Sigmoid colon (tissue), 7 donors: ENCODE measurements at regions of chr9 and their contacts with region 1.

Region 1: GRCh38 chr9:34376596-34377403 is at the start of gene MYORG:
- DNase-seq: peak; percentile 96
- H3K4me3 ChIP-seq: peak within 1 kb of the TSS; percentile 65 to 80 (median 78)
- H3K27ac ChIP-seq: peak within 1 kb of the TSS; percentile 79 to 92 (median 90)
- H3K4me1 ChIP-seq: peaks cover 0 to 73% (median 55%) of the 10 kb centered on the region in 4 donors
- H3K27me3 ChIP-seq: no peaks in the 10 kb centered on the region
- CTCF ChIP-seq: no peak
- EP300 ChIP-seq: no peak
- POLR2A ChIP-seq: peak; percentile 83 to 94
- total RNA-seq, gene MYORG: 3.9 to 23.5 (median 20.0) TPM

Region 2: DNA sequence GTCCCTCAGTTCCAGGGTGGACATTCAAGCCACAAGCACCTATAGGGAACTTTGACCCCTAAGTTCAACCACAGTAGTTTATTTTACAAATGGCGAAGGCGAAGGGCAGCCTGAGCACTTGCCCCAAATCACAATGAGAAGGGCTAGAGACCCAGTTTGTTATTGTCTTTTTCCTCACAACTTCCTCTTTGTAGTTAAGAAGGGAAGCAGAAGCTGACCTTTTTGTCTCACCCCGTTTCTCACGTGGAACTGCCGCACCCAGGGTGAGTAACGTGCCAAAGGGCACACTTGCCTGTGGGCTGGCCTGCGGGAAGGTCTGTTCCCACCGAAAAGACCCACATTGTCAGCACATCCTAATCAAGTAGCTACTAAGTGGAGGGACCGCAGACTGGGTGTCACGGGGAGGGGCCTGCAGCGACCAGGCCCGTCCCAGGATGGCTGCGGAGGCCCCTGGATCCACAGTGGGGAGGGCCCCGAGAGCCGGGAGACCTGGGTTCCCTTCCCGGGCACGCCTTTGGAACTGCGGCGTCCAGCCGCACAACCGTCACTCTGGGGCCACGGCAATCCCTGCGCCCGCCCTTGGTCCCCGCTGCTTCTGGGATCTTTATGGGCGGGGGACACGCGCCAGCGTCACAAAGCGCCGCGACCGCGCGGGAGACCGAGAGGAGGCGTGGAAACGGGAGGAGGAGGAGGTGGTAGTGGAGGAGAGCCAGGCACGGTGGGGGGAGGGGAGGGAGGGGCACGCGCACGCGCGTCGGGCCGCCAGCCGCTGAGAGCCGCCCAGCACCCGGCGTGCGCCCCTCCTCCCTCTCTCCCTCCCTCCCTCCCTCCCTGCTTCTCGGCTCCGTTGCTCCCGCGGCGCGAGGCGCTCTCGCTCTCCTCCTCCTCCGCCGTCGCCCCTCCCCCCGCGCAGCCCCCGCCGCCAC is 560.2 kb before region 1 on chr9 and contains the start of gene UBE2R2:
- intact Hi-C with region 1: loop called (anchors 10 kb)
- DNase-seq: peak; percentile 95
- H3K4me3 ChIP-seq: peak within 1 kb of the TSS; percentile 96 to 97 (median 96)
- H3K27ac ChIP-seq: peak within 1 kb of the TSS; percentile 96 to 99 (median 98)
- H3K4me1 ChIP-seq: peaks cover 0 to 60% (median 54%) of the 10 kb centered on the region in 4 donors
- H3K27me3 ChIP-seq: no peaks in the 10 kb centered on the region
- CTCF ChIP-seq: no peak
- EP300 ChIP-seq: no peak
- POLR2A ChIP-seq: peak; percentile 57 to 76
- total RNA-seq, gene UBE2R2: 24.4 to 32.4 (median 25.7) TPM

Region 3: GRCh38 chr9:34106110-34106509 is 270.7 kb before region 1 on chr9:
- intact Hi-C with region 1: no loop called
- DNase-seq: no peak
- H3K4me3 ChIP-seq: no peak overlapping the region
- H3K27ac ChIP-seq: no peak overlapping the region
- H3K4me1 ChIP-seq: no peaks in the 10 kb centered on the region
- H3K27me3 ChIP-seq: no peaks in the 10 kb centered on the region
- CTCF ChIP-seq: no peak
- EP300 ChIP-seq: no peak
- POLR2A ChIP-seq: no peak

Region 4: GRCh38 chr9:34126207-34127034 is 250.4 kb before region 1 on chr9 and contains the start of gene DCAF12:
- intact Hi-C with region 1: loop called (anchors 2 kb)
- DNase-seq: peak; percentile 95
- H3K4me3 ChIP-seq: peak within 1 kb of the TSS; percentile 59 to 88 (median 80)
- H3K27ac ChIP-seq: peak within 1 kb of the TSS; percentile 81 to 91 (median 89)
- H3K4me1 ChIP-seq: peaks cover 0 to 46% (median 40%) of the 10 kb centered on the region in 4 donors
- H3K27me3 ChIP-seq: no peaks in the 10 kb centered on the region
- CTCF ChIP-seq: no peak
- EP300 ChIP-seq: peak in 1 of 4 donors; percentile 31
- POLR2A ChIP-seq: peak; percentile 62 to 71
- total RNA-seq, gene DCAF12: 14.3 to 25.2 (median 20.2) TPM

Region 5: GRCh38 chr9:34178520-34179212 is 198.1 kb before region 1 on chr9 and contains the start of gene UBAP1:
- intact Hi-C with region 1: loop called (anchors 2 kb)
- DNase-seq: peak; percentile 99
- H3K4me3 ChIP-seq: peak within 1 kb of the TSS; percentile 71 to 92 (median 84)
- H3K27ac ChIP-seq: peak within 1 kb of the TSS; percentile 92 to 96 (median 94)
- H3K4me1 ChIP-seq: peaks cover 0 to 18% (median 11%) of the 10 kb centered on the region in 4 donors
- H3K27me3 ChIP-seq: no peaks in the 10 kb centered on the region
- CTCF ChIP-seq: peak in 1 of 4 experiments; percentile 11
- EP300 ChIP-seq: no peak
- POLR2A ChIP-seq: peak; percentile 81 to 82
- total RNA-seq, gene UBAP1: 42.5 to 52.7 (median 44.3) TPM

Region 6: DNA sequence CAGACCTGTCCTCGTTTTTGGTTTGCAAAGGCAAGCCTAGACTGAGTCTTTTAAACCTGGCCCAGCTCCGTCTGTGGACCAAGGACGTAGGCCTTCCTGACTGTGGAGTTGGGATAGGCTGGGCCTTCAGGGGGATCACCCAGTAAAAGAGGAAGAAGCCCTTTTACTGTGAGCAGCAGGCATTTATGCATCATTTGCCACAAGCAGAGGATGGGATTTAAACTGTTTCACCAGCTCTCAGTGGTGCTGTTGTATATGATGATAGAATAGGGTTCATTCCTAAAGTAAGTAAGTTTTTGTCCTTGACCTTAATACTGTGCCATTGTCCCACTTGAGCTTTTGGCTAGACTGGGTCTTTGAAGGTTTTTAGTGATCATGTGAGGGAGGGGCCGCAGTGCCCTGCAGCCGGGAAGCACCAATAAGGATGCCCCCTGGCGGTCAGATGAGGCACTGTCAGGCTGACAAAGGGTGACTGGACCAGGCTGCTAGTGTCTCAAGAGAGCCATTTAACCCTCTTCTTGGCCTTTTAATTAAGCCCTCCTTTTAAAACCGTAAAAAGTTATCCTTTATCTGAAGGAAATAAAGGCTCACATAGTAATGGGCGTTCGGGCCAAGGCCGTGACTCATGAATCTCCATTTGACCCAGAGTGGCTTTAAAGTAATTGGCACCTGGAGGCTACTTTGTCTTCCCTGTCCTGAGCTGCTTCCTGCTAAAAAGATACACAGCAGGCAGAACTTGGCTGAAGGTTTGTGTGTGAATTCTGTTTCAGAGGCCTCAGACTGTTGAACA is 123.9 kb before region 1 on chr9:
- intact Hi-C with region 1: loop called (anchors 5 kb)
- DNase-seq: peak; percentile 80
- H3K4me3 ChIP-seq: no peak overlapping the region
- H3K27ac ChIP-seq: peak overlapping the region; percentile 63 to 84 (median 78)
- H3K4me1 ChIP-seq: peaks cover 0 to 54% (median 45%) of the 10 kb centered on the region in 4 donors
- H3K27me3 ChIP-seq: no peaks in the 10 kb centered on the region
- CTCF ChIP-seq: peak; percentile 23 to 97 (median 92)
- EP300 ChIP-seq: no peak
- POLR2A ChIP-seq: no peak

Region 7: GRCh38 chr9:34458013-34458958 is 81.5 kb after region 1 on chr9 and contains the starts of genes DNAI1 and FAM219A:
- intact Hi-C with region 1: loop called (anchors 5 kb)
- DNase-seq: peak; percentile 99
- H3K4me3 ChIP-seq: peak within 1 kb of the TSS; percentile 59 to 96 (median 70)
- H3K27ac ChIP-seq: peak within 1 kb of the TSS; percentile 82 to 88 (median 84)
- H3K4me1 ChIP-seq: peaks cover 0 to 36% (median 22%) of the 10 kb centered on the region in 4 donors
- H3K27me3 ChIP-seq: no peaks in the 10 kb centered on the region
- CTCF ChIP-seq: no peak
- EP300 ChIP-seq: no peak
- POLR2A ChIP-seq: peak; percentile 55 to 79
- total RNA-seq, gene DNAI1: under 0.01 TPM in 1 of 4 donors, not detected in the others
- total RNA-seq, gene FAM219A: 7.4 to 10.2 (median 8.8) TPM